Activated B cell treated with CpG ODN at 0.5 μM for 24 hours (primary cell): ENCODE measurements at regions of chr6 and their contacts with region 1.

Region 1: DNA sequence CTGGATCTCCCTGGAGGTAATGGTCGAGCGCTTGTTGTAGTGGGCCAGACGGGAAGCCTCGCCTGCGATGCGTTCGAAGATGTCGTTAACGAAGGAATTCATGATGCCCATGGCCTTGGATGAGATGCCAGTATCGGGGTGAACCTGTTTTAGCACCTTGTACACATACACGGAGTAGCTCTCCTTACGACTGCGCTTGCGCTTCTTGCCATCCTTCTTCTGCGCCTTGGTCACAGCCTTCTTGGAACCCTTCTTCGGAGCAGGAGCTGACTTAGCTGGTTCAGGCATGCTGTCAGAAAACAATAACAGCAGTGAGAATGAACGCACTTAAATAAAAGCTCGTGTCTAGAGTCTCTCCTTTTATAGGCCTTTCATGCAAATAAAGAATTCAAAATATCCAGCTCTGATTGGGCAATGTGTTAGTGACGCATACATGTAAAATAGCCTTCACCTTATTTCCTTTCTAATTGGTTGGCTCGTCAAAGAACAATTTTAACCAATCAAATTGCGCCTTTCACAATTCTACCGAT is 129.2 kb downstream of the HFE start:
- DNase-seq: peak; percentile 62
- ATAC-seq: peak; percentile 78
- H3K4me3 Mint-ChIP-seq: no peak overlapping the region
- H3K27ac Mint-ChIP-seq: no peak overlapping the region
- H3K4me1 Mint-ChIP-seq: peaks cover 12% of the 10 kb centered on the region
- H3K27me3 Mint-ChIP-seq: no peaks in the 10 kb centered on the region
- CTCF ChIP-seq: no peak

Region 2: DNA sequence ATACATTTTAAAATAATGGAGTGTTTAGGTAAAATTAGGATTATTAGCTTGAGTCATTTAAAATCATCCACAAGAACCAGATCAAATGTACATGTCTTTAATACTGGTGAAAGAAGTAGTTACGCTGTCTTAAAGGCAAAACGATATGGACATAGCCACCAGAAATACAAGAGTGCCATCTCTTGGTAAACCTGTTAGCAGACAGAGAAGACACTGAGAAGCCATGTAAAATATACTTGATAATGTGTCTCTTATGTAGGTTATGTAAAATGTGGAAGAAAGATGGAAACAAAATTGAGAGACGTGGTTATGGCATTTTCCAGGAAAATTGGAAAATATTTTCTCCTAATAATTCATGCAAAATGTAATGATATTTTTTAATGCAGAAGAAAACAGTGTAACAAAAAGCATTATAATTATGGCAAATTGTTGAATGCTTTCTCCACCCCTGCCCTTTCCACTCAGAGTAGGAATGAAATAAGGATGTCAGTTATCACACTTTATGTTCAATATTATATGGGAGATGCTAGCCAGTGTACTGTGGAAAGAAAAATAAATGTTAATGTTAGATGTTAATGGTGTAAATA is 273.8 kb before region 1 on chr6:
- CTCF ChIA-PET with region 1: no interaction called
- POLR2A ChIA-PET with region 1: no interaction called
- intact Hi-C with region 1: no loop called
- DNase-seq: no peak
- ATAC-seq: peak; percentile 60
- H3K4me3 Mint-ChIP-seq: no peak overlapping the region
- H3K27ac Mint-ChIP-seq: no peak overlapping the region
- H3K4me1 Mint-ChIP-seq: peaks cover 16% of the 10 kb centered on the region
- H3K27me3 Mint-ChIP-seq: peaks cover 6% of the 10 kb centered on the region
- CTCF ChIP-seq: no peak

Region 3: DNA sequence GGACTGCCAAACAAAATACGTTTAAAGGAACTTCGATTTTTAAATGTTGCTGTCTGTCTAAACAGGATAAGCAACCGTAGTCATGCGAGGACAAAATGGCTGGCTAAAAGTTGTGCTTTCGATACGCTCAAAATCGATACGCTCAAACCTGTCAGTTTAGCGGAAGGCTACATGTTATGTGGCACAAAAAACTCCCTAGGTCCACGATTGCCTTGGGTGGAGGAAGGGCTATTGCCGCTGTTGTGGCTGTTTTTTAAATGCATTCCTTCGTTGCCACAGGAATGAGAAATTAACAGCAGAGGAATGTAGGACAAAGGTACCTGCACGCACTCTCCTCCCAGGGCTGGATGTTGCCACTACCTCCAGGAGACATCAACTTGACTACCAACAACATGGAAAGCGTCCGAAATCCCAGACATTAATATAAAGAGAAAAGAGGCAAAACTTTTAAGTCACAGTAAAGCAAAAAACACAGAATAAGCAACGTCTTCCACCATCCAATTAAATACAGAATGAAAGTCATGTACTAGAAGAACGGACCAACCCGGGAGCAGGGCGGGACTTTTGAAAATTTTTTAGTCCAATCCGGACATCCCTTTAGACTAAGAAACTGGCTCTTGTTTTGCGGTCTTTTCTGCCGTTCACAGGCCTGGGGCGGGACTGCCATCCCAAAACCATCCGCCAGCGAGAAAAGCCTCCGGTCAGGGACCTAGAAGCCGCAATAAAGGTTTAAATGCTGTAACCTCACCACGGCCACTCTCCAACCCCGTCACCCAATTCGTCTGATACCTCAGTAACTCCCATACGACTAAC is 161.4 kb before region 1 on chr6:
- CTCF ChIA-PET with region 1: no interaction called
- POLR2A ChIA-PET with region 1: interaction called, 39 read pairs
- intact Hi-C with region 1: no loop called
- DNase-seq: peak; percentile 63
- ATAC-seq: peak; percentile 65
- H3K4me3 Mint-ChIP-seq: peak overlapping the region; percentile 97
- H3K27ac Mint-ChIP-seq: peak overlapping the region; percentile 100
- H3K4me1 Mint-ChIP-seq: peaks cover 20% of the 10 kb centered on the region
- H3K27me3 Mint-ChIP-seq: no peaks in the 10 kb centered on the region
- CTCF ChIP-seq: no peak

Region 4: GRCh38 chr6:26204332-26205165 is 11.9 kb before region 1 on chr6:
- CTCF ChIA-PET with region 1: interaction called, 5 read pairs
- POLR2A ChIA-PET with region 1: interaction called, 540 read pairs
- intact Hi-C with region 1: loop called (anchors 1 kb)
- DNase-seq: peak; percentile 70
- ATAC-seq: peak; percentile 59
- H3K4me3 Mint-ChIP-seq: no peak overlapping the region
- H3K27ac Mint-ChIP-seq: no peak overlapping the region
- H3K4me1 Mint-ChIP-seq: peaks cover 30% of the 10 kb centered on the region
- H3K27me3 Mint-ChIP-seq: peaks cover 2% of the 10 kb centered on the region
- CTCF ChIP-seq: no peak

Region 5: DNA sequence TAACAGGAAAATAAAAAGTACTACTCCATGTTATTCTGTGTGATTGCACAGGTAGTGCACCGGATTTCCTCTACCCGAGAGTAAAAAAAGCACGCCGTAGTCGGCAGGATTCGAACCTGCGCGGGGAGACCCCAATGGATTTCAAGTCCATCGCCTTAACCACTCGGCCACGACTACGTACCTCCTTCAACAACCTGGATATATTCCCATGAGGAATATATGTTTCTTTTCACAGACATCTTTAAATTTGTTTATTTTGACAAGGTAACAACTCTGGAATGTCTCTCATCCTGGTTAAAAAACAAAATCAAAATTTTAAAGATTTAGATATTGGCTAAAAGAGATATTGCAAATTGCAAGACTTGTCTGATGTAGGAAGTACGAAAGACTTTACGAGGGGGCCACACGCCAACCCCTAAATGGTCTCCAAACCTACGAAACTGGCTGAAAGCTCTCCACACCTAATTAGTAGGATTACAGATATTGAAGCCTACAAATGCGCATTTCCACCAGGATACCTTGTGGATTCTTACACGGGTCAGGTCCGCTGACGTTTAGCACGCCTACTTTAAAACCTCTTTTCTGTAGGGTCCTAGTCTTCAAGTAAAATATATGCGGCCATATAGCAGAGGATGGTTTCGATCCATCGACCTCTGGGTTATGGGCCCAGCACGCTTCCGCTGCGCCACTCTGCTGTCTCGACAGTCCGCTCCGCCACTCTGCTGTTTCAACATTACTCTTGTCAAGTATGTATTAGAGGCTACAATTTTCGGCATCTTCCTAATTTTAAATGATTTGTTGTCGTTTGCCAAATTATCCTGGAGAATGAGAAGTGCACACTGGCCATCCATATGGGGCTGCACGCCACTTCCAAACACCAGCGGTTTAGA is 96.3 kb after region 1 on chr6:
- CTCF ChIA-PET with region 1: no interaction called
- POLR2A ChIA-PET with region 1: interaction called, 10 read pairs
- intact Hi-C with region 1: no loop called
- DNase-seq: peak; percentile 63
- ATAC-seq: peak; percentile 79
- H3K4me3 Mint-ChIP-seq: peak overlapping the region; percentile 90
- H3K27ac Mint-ChIP-seq: peak overlapping the region; percentile 95
- H3K4me1 Mint-ChIP-seq: peaks cover 28% of the 10 kb centered on the region
- H3K27me3 Mint-ChIP-seq: peaks cover 5% of the 10 kb centered on the region
- CTCF ChIP-seq: no peak

Region 6: GRCh38 chr6:26596579-26597388 is 380.4 kb after region 1 on chr6 and contains the start of gene ABT1:
- CTCF ChIA-PET with region 1: no interaction called
- POLR2A ChIA-PET with region 1: interaction called, 10 read pairs
- intact Hi-C with region 1: no loop called
- DNase-seq: peak; percentile 91
- ATAC-seq: peak; percentile 90
- H3K4me3 Mint-ChIP-seq: no peak within 1 kb of the TSS
- H3K27ac Mint-ChIP-seq: no peak within 1 kb of the TSS
- H3K4me1 Mint-ChIP-seq: peaks cover 17% of the 10 kb centered on the region
- H3K27me3 Mint-ChIP-seq: peaks cover 5% of the 10 kb centered on the region
- CTCF ChIP-seq: no peak
- total RNA-seq, gene ABT1: 30.7 and 30.8 TPM in 2 replicates

Region 7: GRCh38 chr6:27864906-27865849 is 1648.8 kb after region 1 on chr6:
- CTCF ChIA-PET with region 1: no interaction called
- POLR2A ChIA-PET with region 1: interaction called, 15 read pairs
- intact Hi-C with region 1: no loop called
- DNase-seq: peak; percentile 68
- ATAC-seq: peak; percentile 85
- H3K4me3 Mint-ChIP-seq: peak overlapping the region; percentile 98
- H3K27ac Mint-ChIP-seq: peak overlapping the region; percentile 99
- H3K4me1 Mint-ChIP-seq: peaks cover 48% of the 10 kb centered on the region
- H3K27me3 Mint-ChIP-seq: no peaks in the 10 kb centered on the region
- CTCF ChIP-seq: no peak